AG04450 (cell line): ENCODE measurements at regions of chr1 and their contacts with region 1.

Region 1: DNA sequence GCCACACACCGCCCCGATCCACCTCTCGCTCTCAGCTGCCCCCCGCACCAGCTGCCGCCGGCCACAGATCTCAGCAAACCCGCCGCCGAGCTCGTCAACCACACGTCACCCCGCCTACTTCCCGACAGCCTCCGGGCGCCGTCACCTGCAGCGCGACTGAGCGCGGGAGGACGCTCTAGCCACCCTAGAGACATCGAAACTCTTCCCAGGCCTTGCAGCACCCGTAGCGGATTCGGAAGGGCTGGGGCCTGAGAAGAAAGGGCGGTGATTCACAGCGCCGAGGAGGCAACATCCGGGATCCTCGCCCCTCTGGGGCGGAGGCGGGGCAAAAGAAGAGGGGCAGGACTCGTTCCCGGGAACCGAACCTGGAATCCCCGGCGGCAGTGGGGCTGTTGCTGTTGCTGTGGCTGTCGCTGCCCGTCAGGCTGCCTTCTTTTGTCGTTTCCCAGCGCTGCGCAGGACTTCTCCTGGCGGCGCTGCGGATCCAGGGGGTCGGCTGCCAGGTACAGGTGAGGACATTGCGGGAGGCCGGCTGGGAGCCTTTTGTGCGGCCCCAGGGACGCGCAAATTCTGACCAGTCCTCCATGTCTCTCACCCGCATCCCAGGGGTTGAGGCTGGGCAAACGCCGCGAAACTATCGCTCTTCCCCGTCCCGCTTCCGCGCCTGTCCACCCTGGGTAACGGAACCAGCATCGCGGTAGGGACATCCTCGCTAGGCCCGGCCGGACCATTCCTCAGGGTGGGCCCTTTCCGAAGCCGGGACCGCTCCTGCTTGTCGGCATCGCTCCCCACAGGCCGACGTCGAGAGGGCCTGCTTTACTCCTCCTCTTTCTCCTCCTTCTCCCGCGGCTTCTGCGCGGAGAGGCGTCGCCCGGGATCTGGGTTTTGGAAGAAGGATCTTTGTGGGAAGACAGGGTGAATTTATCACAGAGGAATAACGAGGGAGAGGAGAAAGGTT is at the starts of genes RO60 and UCHL5:
- DNase-seq: peak; percentile 94
- H3K4me3 ChIP-seq: peak within 1 kb of the TSS; percentile 95
- H3K27ac ChIP-seq: peak within 1 kb of the TSS; percentile 99
- H3K27me3 ChIP-seq: no peaks in the 10 kb centered on the region
- CTCF ChIP-seq: no peak
- polyA plus RNA-seq, gene RO60: 28.1 and 39.4 TPM in 2 replicates
- polyA plus RNA-seq, gene UCHL5: 18.4 and 28.8 TPM in 2 replicates

Region 2: DNA sequence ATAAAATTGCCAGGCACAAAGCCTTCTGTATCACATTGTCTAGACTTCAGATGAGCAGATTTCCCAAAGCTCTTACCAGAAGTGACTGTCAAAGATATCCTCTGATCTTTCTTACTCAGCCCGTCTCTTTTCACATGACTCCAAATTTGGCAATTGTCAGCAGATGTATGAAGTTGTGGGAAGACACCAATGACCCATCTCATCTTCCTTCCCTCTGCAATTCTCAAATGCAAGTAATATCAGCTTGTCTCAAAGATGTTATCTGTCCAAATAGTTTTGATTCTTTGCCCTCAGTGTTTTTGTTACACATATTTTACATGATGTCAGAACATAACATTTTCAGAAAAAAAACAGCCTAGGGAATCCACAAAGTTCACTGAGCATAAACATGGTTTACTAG is 295.8 kb before region 1 on chr1:
- CTCF ChIA-PET with region 1: no interaction called
- POLR2A ChIA-PET with region 1: no interaction called
- DNase-seq: peak; percentile 73
- H3K4me3 ChIP-seq: no peak overlapping the region
- H3K27ac ChIP-seq: no peak overlapping the region
- H3K27me3 ChIP-seq: no peaks in the 10 kb centered on the region
- CTCF ChIP-seq: no peak

Region 3: DNA sequence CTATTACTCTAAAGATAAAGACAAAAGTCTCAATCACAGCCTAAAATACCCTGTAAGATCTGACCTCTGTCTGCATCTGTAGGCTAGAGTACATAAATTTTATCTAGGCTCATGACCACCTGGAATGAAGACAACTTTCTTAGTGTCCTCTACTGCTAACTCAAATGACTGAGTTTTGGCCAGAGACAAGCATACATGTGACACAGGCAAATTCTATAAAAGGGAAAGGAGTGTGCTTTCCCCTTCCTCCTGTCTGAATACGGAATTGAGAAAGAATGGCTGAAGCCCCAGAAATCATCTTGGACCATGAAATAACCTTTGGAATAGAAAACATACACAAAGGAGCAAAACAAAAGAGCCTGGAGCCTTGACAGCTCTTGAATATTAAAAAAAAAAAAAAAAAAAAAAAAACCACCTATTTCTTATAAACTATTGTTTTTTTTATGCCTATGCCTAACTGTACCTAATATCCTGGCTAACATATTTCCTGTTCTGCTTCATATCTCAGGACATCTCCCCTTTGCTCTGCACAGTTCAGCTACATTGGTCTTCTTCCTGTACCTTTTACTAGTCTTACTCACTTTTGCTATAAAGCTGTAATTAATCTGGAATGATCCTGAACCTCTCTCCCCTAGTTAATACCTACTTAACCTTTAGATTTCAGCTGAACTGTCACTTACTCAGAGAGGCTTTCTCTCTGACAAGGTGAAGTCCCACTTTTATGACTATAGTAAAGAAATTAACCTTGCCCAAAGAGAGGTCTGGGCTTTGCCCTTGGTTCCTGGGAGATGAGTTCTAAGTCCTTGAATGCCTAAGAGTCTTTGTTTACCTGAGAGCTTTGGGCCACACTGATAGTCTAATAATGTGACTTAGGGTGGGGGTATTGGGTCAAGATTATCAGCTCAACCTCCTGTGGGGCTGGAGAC is 16.5 kb before region 1 on chr1:
- CTCF ChIA-PET with region 1: no interaction called
- POLR2A ChIA-PET with region 1: interaction called, 10 read pairs
- DNase-seq: no peak
- H3K4me3 ChIP-seq: no peak overlapping the region
- H3K27ac ChIP-seq: no peak overlapping the region
- H3K27me3 ChIP-seq: no peaks in the 10 kb centered on the region
- CTCF ChIP-seq: no peak